ENCODE measurements at regions of chr9 and their contacts with region 1.

Region 1: GRCh38 chr9:136118320-136119060 is at the start of gene TMEM250:
- DNase-seq: peak; percentile 99
- total RNA-seq, gene TMEM250: 25.0 to 29.1 TPM

Region 2: DNA sequence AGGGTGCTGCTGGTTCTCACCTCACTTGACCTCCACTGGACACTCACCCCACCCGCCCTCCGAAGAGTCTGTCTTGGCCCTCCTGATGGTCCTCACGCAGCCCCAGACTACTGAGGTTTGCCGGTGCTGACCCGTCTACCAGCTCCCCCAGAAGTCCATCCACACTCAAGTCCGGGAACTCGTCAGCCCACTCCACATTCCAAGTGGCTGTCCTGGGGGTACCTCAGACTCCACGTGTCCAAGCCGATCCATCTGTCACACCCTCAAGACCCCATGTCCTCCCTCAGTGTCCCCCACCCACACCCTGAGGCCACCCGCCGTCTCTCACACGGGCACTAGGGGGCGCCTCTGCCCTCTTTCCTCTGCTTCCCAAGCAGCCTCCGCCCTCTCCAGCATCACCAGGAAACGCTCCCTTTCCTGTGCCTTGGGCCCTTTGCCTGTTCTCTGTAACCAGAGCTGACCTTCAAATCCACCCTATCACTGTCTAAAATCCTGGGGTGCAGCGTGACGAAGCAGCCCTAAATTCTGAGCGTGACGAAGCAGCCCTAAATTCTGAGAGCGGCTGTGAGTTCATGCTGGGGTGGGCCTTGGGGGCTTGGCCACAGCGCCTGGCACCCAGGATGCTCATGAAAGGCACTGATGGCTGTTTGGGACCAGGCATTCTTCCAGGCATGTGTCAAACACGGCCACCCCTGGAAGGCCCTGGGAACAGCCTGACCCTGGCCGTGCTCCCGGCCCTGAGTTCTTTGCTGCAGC is 320.8 kb before region 1 on chr9:
- intact Hi-C with region 1: no loop called
- DNase-seq: no peak

Region 3: DNA sequence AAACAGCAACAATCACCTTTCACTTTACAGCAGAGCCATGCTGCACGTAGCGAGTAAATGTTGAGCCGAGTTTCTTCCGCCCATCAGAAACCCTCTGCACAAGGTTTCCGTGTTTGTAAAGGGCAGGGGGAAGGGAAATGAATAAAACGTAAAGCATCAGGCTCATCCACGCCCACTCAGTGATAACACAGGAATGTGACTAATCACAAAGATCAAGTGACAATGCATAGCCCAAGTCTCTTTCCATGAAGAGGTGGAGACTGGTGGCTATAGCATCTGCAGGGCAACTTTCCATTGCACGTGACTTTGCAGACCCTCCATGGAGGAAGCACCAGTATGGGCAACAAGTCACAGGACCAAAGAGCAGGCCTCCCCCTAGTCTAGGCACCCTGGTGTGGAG is 267.8 kb before region 1 on chr9:
- intact Hi-C with region 1: no loop called
- DNase-seq: no peak

Region 4: DNA sequence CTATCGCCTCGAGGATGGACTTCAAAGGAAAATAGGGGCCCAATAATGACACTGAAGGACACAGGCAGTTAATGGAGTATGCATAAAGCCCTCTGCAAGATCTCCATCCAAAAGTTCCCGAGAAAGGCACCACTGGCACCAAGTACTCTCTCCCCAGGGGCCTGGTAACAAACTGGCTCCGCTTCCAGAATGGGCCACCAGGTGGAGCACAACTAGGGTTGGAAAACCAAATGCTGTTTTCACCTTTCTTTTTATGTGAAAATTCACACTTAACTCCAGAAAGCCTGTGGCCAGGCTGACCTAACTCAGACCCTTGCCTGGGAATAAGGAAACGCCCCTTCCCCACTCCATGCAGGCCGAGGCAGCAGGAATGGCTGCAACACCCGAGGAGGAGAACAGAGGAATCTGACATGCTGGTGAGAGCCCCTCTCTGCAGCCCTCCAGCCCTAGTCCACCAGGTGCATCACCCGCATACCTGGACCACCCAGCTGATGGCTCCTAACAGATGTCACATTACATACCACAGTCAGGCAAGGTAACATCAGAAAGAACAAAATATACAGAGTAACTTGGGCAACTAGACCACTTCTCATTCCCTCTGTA is 253.9 kb before region 1 on chr9:
- intact Hi-C with region 1: loop called (anchors 10 kb)
- DNase-seq: peak; percentile 87

Region 5: GRCh38 chr9:135961277-135961705 is 157.2 kb before region 1 on chr9 and contains the start of gene UBAC1:
- intact Hi-C with region 1: loop called in 1 of 2 experiments (anchors 2 kb)
- DNase-seq: peak; percentile 99
- total RNA-seq, gene UBAC1: 32.7 to 34.1 TPM

Region 6: GRCh38 chr9:135971892-135972291 is 146.6 kb before region 1 on chr9:
- intact Hi-C with region 1: loop called (anchors 1 to 2 kb)
- DNase-seq: no peak

Region 7: DNA sequence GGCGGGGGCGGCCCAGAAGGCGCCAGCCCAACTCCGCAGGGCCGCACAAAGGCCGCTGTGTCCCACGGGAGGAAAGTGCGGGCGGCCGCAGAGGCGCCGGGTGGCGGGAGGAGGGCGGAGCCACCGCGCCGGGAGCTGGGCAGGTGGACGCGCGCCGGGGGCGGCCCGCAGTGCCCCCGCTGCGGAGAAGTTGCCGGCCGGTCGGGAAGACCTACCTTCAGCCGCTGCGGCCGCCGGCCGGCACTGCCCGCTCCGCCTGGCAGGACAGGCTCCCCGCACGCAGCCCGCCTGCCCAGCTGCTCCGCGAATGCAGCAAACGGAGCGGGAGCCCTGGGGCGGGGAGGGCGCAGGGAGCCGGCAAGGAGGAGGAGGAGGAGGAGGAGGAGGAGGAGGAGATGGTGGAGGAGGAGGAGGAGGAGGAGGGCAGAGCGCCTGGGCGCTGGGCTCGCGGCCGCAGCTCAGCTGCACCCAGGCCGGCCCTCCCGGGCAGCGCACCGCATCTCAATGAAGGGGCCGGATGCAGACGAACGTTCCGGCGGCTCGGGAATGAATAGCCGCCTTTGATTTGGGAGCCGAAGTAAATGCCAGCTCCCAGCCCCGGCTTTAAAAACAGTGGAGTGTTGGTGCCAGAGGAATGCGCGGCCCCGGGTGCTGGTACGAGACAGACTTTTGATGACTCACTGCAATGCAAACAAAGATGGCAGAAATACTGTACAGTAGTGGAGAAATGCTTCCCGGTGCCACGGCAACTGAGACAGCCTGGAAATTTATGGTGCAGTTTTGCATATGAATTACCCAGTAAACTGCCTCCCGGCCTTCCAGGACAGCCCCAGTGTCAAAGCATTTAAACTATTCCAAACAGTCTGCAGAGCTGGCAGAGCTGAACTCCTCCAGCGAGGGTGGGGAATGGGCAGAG is 66.7 kb before region 1 on chr9:
- intact Hi-C with region 1: loop called in 1 of 2 experiments (anchors 2 kb)
- DNase-seq: peak; percentile 85

Measured in posterior vena cava (tissue), 2 donors.